CD4-positive, alpha-beta T cell (primary cell): ENCODE measurements at regions of chr3 and their contacts with region 1.

Region 1: DNA sequence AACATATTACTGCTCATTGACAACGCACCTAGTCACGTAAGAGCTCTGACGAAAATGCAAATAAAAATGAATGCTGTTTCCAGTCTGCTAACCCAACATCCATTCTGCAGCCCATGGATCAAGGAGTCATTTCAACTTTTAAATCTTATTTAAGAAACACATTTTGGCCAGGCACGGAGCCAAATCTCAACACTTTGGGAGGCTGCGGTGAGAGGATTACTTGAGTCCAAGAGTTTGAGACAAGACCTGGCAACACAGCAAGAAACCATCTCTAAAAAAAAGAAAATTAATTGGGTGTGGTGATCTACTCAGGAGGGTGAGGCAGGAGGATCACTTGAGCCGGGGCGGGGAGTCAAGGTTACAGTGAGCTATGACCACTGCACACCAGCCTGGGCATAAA is 22.4 kb upstream of the TM4SF19 start:
- DNase-seq: no peak
- ATAC-seq: no peak
- H3K4me3 ChIP-seq: no peak overlapping the region
- H3K4me3 Mint-ChIP-seq: no peak overlapping the region
- H3K27ac ChIP-seq: no peak overlapping the region
- H3K27ac Mint-ChIP-seq: no peak overlapping the region
- H3K4me1 ChIP-seq: no peaks in the 10 kb centered on the region
- H3K4me1 Mint-ChIP-seq: peaks cover 8% of the 10 kb centered on the region
- H3K27me3 ChIP-seq: no peaks in the 10 kb centered on the region
- H3K27me3 Mint-ChIP-seq: no peaks in the 10 kb centered on the region
- CTCF ChIP-seq: no peak

Region 2: GRCh38 chr3:196323701-196324100 is 36.9 kb before region 1 on chr3:
- CTCF ChIA-PET with region 1: no interaction called
- POLR2A ChIA-PET with region 1: no interaction called
- intact Hi-C with region 1: loop called in 1 of 2 experiments (anchors 2 kb)
- DNase-seq: no peak
- ATAC-seq: no peak
- H3K4me3 ChIP-seq: no peak overlapping the region
- H3K4me3 Mint-ChIP-seq: no peak overlapping the region
- H3K27ac ChIP-seq: no peak overlapping the region
- H3K27ac Mint-ChIP-seq: no peak overlapping the region
- H3K4me1 ChIP-seq: peaks cover 7% of the 10 kb centered on the region
- H3K4me1 Mint-ChIP-seq: no peaks in the 10 kb centered on the region
- H3K27me3 ChIP-seq: peaks cover 0 to 2% of the 10 kb centered on the region in 2 experiments
- H3K27me3 Mint-ChIP-seq: no peaks in the 10 kb centered on the region
- CTCF ChIP-seq: peak; percentile 14

Region 3: DNA sequence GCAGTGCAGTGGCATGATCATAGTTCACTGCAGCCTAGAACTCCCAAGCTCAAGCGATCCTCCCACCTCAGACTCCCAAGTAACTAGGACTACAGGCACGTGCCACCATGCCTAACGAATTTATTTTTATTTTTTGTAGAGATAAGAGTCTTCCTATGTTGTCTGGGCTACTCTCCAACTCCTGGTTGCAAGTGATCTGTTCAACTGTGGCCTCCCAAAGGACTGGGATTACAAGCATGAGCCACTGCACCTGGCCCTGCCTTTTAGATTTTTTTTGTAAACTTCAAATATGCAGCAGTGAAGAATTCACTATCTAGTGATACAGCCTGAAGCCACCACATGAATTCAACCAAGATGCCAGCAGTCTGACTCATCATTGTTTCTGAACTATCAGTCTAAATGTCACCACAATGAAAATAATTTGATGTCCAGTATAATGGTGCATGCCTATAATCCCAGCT is 38.9 kb after region 1 on chr3:
- CTCF ChIA-PET with region 1: no interaction called
- POLR2A ChIA-PET with region 1: no interaction called
- intact Hi-C with region 1: no loop called
- DNase-seq: no peak
- ATAC-seq: no peak
- H3K4me3 ChIP-seq: no peak overlapping the region
- H3K4me3 Mint-ChIP-seq: no peak overlapping the region
- H3K27ac ChIP-seq: no peak overlapping the region
- H3K27ac Mint-ChIP-seq: no peak overlapping the region
- H3K4me1 ChIP-seq: no peaks in the 10 kb centered on the region
- H3K4me1 Mint-ChIP-seq: no peaks in the 10 kb centered on the region
- H3K27me3 ChIP-seq: no peaks in the 10 kb centered on the region
- H3K27me3 Mint-ChIP-seq: no peaks in the 10 kb centered on the region
- CTCF ChIP-seq: no peak